ENCODE measurements at regions of chr11 and their contacts with region 1.

Region 1: DNA sequence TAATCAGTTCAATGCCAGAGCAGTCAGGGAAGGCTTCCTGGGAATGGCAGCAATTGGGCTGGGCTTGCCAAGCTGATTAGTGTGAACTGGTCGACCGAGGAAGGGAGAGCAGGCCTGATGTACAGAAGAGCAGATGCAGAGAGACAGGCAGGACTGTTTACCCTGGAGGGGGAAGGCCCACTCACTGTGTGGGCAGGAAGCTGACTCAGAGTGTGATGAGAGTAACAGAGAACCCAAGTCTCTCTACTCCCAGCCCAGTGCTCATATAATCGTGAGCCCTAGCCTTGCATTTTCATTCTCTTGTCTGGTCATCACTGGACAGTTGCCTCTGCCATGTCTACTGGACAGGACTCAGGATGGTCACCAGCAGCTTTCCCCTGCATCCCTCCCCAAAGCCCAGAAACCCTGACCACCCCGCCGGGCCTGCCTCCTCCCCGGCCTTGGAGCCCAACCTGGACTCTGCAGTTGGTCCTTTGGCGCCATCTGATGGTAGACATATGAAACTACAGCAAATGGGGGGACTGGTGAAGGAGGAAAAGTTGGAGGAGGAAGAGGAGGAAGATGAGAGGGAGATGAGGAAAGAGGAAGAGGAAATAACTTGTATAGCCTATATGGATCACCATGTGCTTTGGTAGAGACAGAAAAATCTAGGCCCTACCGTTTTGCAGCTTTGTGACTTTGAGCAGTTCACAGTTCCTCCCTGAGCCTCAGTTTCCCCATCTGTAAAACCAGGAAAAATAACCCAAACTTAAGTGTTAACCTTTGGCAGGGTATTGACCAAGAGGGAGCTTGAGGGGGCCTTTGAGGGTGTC is 43.4 kb upstream of the PRDM11 start:
- DNase-seq: peak; percentile 25 to 87 (median 66)
- ATAC-seq: peak; percentile 92
- H3K4me3 ChIP-seq: peak overlapping the region in 1 of 2 experiments; percentile 37
- H3K4me3 Mint-ChIP-seq: peak overlapping the region; percentile 70
- H3K27ac ChIP-seq: peak overlapping the region in 1 of 2 experiments; percentile 64
- H3K27ac Mint-ChIP-seq: no peak overlapping the region
- H3K4me1 ChIP-seq: peaks cover 14% of the 10 kb centered on the region
- H3K4me1 Mint-ChIP-seq: peaks cover 11% of the 10 kb centered on the region
- H3K27me3 ChIP-seq: no peaks in the 10 kb centered on the region
- H3K27me3 Mint-ChIP-seq: peaks cover 12% of the 10 kb centered on the region
- CTCF ChIP-seq: peak; percentile 94

Region 2: GRCh38 chr11:44334356-44335004 is 768.5 kb before region 1 on chr11:
- CTCF ChIA-PET with region 1: no interaction called
- POLR2A ChIA-PET with region 1: no interaction called
- intact Hi-C with region 1: no loop called
- DNase-seq: no peak
- ATAC-seq: no peak
- H3K4me3 ChIP-seq: no peak overlapping the region
- H3K4me3 Mint-ChIP-seq: no peak overlapping the region
- H3K27ac ChIP-seq: no peak overlapping the region
- H3K27ac Mint-ChIP-seq: no peak overlapping the region
- H3K4me1 ChIP-seq: no peaks in the 10 kb centered on the region
- H3K4me1 Mint-ChIP-seq: no peaks in the 10 kb centered on the region
- H3K27me3 ChIP-seq: peaks cover 0 to 3% of the 10 kb centered on the region in 2 experiments
- H3K27me3 Mint-ChIP-seq: peaks cover 46% of the 10 kb centered on the region
- CTCF ChIP-seq: no peak

Region 3: DNA sequence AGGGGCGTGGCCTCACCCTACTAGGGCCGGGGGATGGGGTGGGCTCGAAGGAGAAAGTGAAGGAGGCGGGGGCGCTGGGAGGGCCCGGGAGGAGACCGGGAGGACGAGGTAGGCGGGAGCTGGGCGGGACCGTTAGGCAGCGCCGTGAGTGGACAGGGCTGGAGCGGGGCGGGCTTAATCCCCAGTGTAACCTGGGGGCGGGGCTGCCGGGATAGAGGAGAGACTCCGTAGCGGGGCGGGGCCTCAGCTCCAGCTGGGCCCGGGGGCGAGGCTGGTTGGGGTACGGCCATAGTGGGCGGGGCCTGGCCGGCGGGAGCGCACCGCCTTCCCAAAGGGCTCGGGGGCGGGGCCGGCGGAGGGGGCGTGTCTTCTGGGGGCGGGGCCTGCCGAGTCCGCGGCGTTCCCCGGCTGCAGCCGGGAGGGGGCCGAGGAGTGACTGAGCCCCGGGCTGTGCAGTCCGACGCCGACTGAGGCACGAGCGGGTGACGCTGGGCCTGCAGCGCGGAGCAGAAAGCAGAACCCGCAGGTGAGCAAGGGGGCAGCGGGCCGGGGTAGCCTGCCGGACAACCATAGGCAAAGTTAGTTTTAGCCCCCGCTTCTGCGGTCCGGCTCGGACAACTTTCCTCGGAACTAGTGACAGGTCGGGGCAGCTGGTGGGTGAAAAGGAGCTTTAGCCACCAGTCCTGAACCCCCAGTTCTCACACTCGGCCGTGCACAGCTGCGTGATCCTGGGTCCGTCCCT is 537.6 kb before region 1 on chr11 and contains the start of gene CD82:
- CTCF ChIA-PET with region 1: interaction called, 4 read pairs
- POLR2A ChIA-PET with region 1: no interaction called
- intact Hi-C with region 1: loop called (anchors 2 to 10 kb)
- DNase-seq: peak; percentile 88 to 98 (median 95)
- ATAC-seq: peak; percentile 73
- H3K4me3 ChIP-seq: peak within 1 kb of the TSS; percentile 86 to 89
- H3K4me3 Mint-ChIP-seq: peak within 1 kb of the TSS; percentile 82
- H3K27ac ChIP-seq: peak within 1 kb of the TSS; percentile 33 to 71
- H3K27ac Mint-ChIP-seq: peak within 1 kb of the TSS; percentile 82
- H3K4me1 ChIP-seq: peaks cover 47% of the 10 kb centered on the region
- H3K4me1 Mint-ChIP-seq: peaks cover 53% of the 10 kb centered on the region
- H3K27me3 ChIP-seq: no peaks in the 10 kb centered on the region
- H3K27me3 Mint-ChIP-seq: no peaks in the 10 kb centered on the region
- CTCF ChIP-seq: peak; percentile 39
- total RNA-seq, gene CD82: 28.1 to 32.4 TPM

Region 4: GRCh38 chr11:44916801-44917385 is 186.1 kb before region 1 on chr11:
- CTCF ChIA-PET with region 1: interaction called, 38 read pairs
- POLR2A ChIA-PET with region 1: no interaction called
- intact Hi-C with region 1: no loop called
- DNase-seq: no peak
- ATAC-seq: no peak
- H3K4me3 ChIP-seq: no peak overlapping the region
- H3K4me3 Mint-ChIP-seq: no peak overlapping the region
- H3K27ac ChIP-seq: no peak overlapping the region
- H3K27ac Mint-ChIP-seq: no peak overlapping the region
- H3K4me1 ChIP-seq: no peaks in the 10 kb centered on the region
- H3K4me1 Mint-ChIP-seq: no peaks in the 10 kb centered on the region
- H3K27me3 ChIP-seq: no peaks in the 10 kb centered on the region
- H3K27me3 Mint-ChIP-seq: no peaks in the 10 kb centered on the region
- CTCF ChIP-seq: no peak

Region 5: GRCh38 chr11:44950625-44951476 is 152.2 kb before region 1 on chr11 and contains the start of gene TP53I11:
- CTCF ChIA-PET with region 1: interaction called, 1,504 read pairs
- POLR2A ChIA-PET with region 1: no interaction called
- intact Hi-C with region 1: loop called in 1 of 2 experiments (anchors 1 kb)
- DNase-seq: peak; percentile 31 to 82 (median 52)
- ATAC-seq: peak; percentile 79
- H3K4me3 ChIP-seq: peak within 1 kb of the TSS; percentile 56 to 73
- H3K4me3 Mint-ChIP-seq: peak within 1 kb of the TSS; percentile 86
- H3K27ac ChIP-seq: no peak within 1 kb of the TSS
- H3K27ac Mint-ChIP-seq: no peak within 1 kb of the TSS
- H3K4me1 ChIP-seq: no peaks in the 10 kb centered on the region
- H3K4me1 Mint-ChIP-seq: peaks cover 7% of the 10 kb centered on the region
- H3K27me3 ChIP-seq: no peaks in the 10 kb centered on the region
- H3K27me3 Mint-ChIP-seq: no peaks in the 10 kb centered on the region
- CTCF ChIP-seq: peak; percentile 47
- total RNA-seq, gene TP53I11: 4.8 to 6.8 TPM

Region 6: GRCh38 chr11:44977476-44977984 is 125.5 kb before region 1 on chr11:
- CTCF ChIA-PET with region 1: interaction called, 23 read pairs
- POLR2A ChIA-PET with region 1: no interaction called
- intact Hi-C with region 1: no loop called
- DNase-seq: peak in 2 of 9 experiments; percentile 29 to 51
- ATAC-seq: peak; percentile 26
- H3K4me3 ChIP-seq: peak overlapping the region in 1 of 2 experiments; percentile 31
- H3K4me3 Mint-ChIP-seq: peak overlapping the region; percentile 27
- H3K27ac ChIP-seq: peak overlapping the region in 1 of 2 experiments; percentile 46
- H3K27ac Mint-ChIP-seq: no peak overlapping the region
- H3K4me1 ChIP-seq: peaks cover 40% of the 10 kb centered on the region
- H3K4me1 Mint-ChIP-seq: peaks cover 5% of the 10 kb centered on the region
- H3K27me3 ChIP-seq: no peaks in the 10 kb centered on the region
- H3K27me3 Mint-ChIP-seq: no peaks in the 10 kb centered on the region
- CTCF ChIP-seq: no peak

Region 7: GRCh38 chr11:45048870-45049691 is 53.9 kb before region 1 on chr11:
- CTCF ChIA-PET with region 1: interaction called, 13 read pairs
- POLR2A ChIA-PET with region 1: no interaction called
- intact Hi-C with region 1: no loop called
- DNase-seq: no peak
- ATAC-seq: no peak
- H3K4me3 ChIP-seq: no peak overlapping the region
- H3K4me3 Mint-ChIP-seq: no peak overlapping the region
- H3K27ac ChIP-seq: no peak overlapping the region
- H3K27ac Mint-ChIP-seq: no peak overlapping the region
- H3K4me1 ChIP-seq: no peaks in the 10 kb centered on the region
- H3K4me1 Mint-ChIP-seq: peaks cover 5% of the 10 kb centered on the region
- H3K27me3 ChIP-seq: no peaks in the 10 kb centered on the region
- H3K27me3 Mint-ChIP-seq: no peaks in the 10 kb centered on the region
- CTCF ChIP-seq: no peak

Region 8: GRCh38 chr11:45087086-45087899 is 15.7 kb before region 1 on chr11:
- CTCF ChIA-PET with region 1: interaction called, 41 read pairs
- POLR2A ChIA-PET with region 1: interaction called, 5 read pairs
- intact Hi-C with region 1: loop called in 1 of 2 experiments (anchors 2 kb)
- DNase-seq: no peak
- ATAC-seq: no peak
- H3K4me3 ChIP-seq: no peak overlapping the region
- H3K4me3 Mint-ChIP-seq: no peak overlapping the region
- H3K27ac ChIP-seq: no peak overlapping the region
- H3K27ac Mint-ChIP-seq: no peak overlapping the region
- H3K4me1 ChIP-seq: peaks cover 18% of the 10 kb centered on the region
- H3K4me1 Mint-ChIP-seq: peaks cover 39% of the 10 kb centered on the region
- H3K27me3 ChIP-seq: no peaks in the 10 kb centered on the region
- H3K27me3 Mint-ChIP-seq: no peaks in the 10 kb centered on the region
- CTCF ChIP-seq: no peak

Measured in CD8-positive, alpha-beta T cell (primary cell).